HCT116 (cell line): ENCODE measurements at regions of chr5 and their contacts with region 1.

Region 1: GRCh38 chr5:72138943-72139521 is 31.8 kb downstream of the MAP1B start:
- DNase-seq: no peak
- ATAC-seq: no peak
- H3K4me3 ChIP-seq: no peak overlapping the region
- H3K27ac ChIP-seq: no peak overlapping the region
- H3K4me1 ChIP-seq: peaks cover 0 to 12% of the 10 kb centered on the region in 2 experiments; a peak in 1 of 4 replicates
- H3K27me3 ChIP-seq: no peaks in the 10 kb centered on the region
- CTCF ChIP-seq: no peak
- POLR2A ChIP-seq: no peak
- RAD21 ChIP-seq: no peak

Region 2: GRCh38 chr5:71996789-71997188 is 142.2 kb before region 1 on chr5:
- CTCF ChIA-PET with region 1: no interaction called
- POLR2A ChIA-PET with region 1: no interaction called
- RAD21 ChIA-PET with region 1: no interaction called
- intact Hi-C with region 1: no loop called
- DNase-seq: no peak
- ATAC-seq: no peak
- H3K4me3 ChIP-seq: no peak overlapping the region
- H3K27ac ChIP-seq: no peak overlapping the region
- H3K4me1 ChIP-seq: no peaks in the 10 kb centered on the region
- H3K27me3 ChIP-seq: no peaks in the 10 kb centered on the region
- CTCF ChIP-seq: no peak
- POLR2A ChIP-seq: no peak
- RAD21 ChIP-seq: no peak

Region 3: GRCh38 chr5:72093217-72093616 is 45.8 kb before region 1 on chr5:
- CTCF ChIA-PET with region 1: no interaction called
- POLR2A ChIA-PET with region 1: no interaction called
- RAD21 ChIA-PET with region 1: no interaction called
- intact Hi-C with region 1: no loop called
- DNase-seq: no peak
- ATAC-seq: no peak
- H3K4me3 ChIP-seq: no peak overlapping the region
- H3K27ac ChIP-seq: no peak overlapping the region
- H3K4me1 ChIP-seq: no peaks in the 10 kb centered on the region
- H3K27me3 ChIP-seq: no peaks in the 10 kb centered on the region
- CTCF ChIP-seq: no peak
- POLR2A ChIP-seq: no peak
- RAD21 ChIP-seq: no peak

Region 4: DNA sequence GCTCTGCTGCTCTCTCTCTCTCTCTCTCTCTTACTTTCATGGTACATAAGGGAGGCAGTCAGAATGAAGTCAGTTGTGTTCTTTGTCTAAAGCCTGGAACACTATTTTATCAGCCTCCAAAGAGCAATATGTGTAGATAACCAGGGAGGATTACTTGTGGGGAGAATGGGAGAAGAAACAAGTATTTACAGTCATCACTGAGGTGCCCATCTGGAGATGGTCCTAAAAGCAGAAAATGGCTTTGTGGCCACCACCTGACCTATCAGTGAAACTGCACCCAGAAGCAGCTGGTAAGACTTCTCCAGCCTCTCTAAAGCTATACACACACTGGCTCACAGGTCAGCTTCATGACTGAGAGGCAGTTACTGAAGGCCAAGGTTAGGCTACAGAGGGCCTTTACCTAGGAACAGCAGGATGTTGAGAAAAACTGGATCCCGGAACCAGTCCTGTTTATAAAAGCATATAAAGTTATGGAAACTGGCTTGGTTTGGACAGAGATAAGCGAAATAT is 105.9 kb after region 1 on chr5:
- CTCF ChIA-PET with region 1: no interaction called
- POLR2A ChIA-PET with region 1: no interaction called
- RAD21 ChIA-PET with region 1: no interaction called
- intact Hi-C with region 1: loop called (anchors 5 kb)
- DNase-seq: peak; percentile 24
- ATAC-seq: peak; percentile 84
- H3K4me3 ChIP-seq: no peak overlapping the region
- H3K27ac ChIP-seq: no peak overlapping the region
- H3K4me1 ChIP-seq: peaks cover 26 to 41% of the 10 kb centered on the region in 2 experiments
- H3K27me3 ChIP-seq: no peaks in the 10 kb centered on the region
- CTCF ChIP-seq: peak; percentile 30 to 51 (median 45); a peak in 5 of 6 replicates
- POLR2A ChIP-seq: no peak
- RAD21 ChIP-seq: peak; percentile 54

Region 5: DNA sequence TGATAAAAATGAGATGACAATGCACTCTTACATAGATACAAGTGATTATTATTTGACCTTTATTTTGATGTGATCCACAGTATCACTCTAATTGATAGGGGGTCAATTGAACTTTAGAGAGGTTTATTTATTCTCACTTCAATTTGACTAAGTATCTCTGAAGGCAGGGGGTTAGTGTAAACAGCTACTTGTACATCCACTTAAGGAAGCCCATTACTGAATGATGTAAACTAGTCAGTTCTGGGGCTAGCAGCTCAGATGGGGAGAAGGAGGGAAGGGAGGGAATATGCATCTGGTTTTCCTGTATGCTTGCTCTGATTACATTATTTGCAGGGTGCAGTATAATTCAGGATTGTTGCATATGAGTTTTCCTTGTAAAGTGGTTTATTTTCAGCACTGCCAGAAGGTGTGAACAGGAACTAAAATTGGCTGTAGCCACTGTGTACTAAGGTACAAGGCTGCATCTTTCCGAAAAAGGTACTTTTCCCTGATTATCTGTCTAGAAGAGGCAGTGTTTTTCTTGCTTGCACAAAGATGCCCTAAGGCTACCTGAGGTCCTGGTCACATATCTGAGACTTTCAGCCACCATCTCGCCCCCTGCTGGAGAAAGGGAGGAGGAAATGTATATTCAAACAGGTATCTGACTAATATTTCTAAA is 129.8 kb after region 1 on chr5:
- CTCF ChIA-PET with region 1: no interaction called
- POLR2A ChIA-PET with region 1: no interaction called
- RAD21 ChIA-PET with region 1: no interaction called
- intact Hi-C with region 1: loop called (anchors 5 kb)
- DNase-seq: peak; percentile 44
- ATAC-seq: peak; percentile 70
- H3K4me3 ChIP-seq: no peak overlapping the region
- H3K27ac ChIP-seq: no peak overlapping the region
- H3K4me1 ChIP-seq: no peaks in the 10 kb centered on the region
- H3K27me3 ChIP-seq: no peaks in the 10 kb centered on the region
- CTCF ChIP-seq: peak; percentile 56 to 90 (median 75); a peak in 5 of 6 replicates
- POLR2A ChIP-seq: no peak
- RAD21 ChIP-seq: peak; percentile 70

Region 6: DNA sequence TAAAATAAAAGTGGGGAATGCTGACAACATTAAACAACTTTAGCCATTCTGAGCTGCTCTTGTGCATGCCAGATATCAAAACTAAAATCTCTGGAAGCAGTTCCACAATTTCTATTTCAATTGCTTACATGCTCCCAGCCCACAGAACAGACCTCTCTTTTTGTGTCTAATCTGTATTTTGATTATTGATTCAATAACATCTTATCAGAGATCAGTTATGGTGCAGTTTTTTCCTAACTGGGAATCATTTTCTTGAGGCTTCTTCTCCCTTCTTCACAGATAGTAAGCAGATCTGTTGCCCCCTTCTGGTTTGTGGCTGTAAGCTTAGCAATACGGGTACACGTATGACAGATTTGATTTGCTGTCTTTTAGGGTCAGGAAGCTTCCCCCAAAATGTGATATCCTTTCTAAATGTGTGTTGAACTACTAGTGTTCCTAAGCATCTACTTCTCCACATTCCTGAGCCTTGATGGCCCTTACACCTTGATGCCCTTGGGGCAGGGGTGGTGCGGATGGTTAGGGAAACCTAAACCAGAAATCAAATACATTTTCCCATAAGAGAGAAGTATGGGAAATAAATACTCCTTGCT is 141.6 kb after region 1 on chr5:
- CTCF ChIA-PET with region 1: no interaction called
- POLR2A ChIA-PET with region 1: no interaction called
- RAD21 ChIA-PET with region 1: no interaction called
- intact Hi-C with region 1: loop called (anchors 1 kb)
- DNase-seq: peak; percentile 39
- ATAC-seq: peak; percentile 80
- H3K4me3 ChIP-seq: no peak overlapping the region
- H3K27ac ChIP-seq: no peak overlapping the region
- H3K4me1 ChIP-seq: peaks cover 0 to 5% of the 10 kb centered on the region in 2 experiments; a peak in 1 of 4 replicates
- H3K27me3 ChIP-seq: no peaks in the 10 kb centered on the region
- CTCF ChIP-seq: peak; percentile 32 to 64 (median 53); a peak in 5 of 6 replicates
- POLR2A ChIP-seq: no peak
- RAD21 ChIP-seq: peak; percentile 48

Region 7: DNA sequence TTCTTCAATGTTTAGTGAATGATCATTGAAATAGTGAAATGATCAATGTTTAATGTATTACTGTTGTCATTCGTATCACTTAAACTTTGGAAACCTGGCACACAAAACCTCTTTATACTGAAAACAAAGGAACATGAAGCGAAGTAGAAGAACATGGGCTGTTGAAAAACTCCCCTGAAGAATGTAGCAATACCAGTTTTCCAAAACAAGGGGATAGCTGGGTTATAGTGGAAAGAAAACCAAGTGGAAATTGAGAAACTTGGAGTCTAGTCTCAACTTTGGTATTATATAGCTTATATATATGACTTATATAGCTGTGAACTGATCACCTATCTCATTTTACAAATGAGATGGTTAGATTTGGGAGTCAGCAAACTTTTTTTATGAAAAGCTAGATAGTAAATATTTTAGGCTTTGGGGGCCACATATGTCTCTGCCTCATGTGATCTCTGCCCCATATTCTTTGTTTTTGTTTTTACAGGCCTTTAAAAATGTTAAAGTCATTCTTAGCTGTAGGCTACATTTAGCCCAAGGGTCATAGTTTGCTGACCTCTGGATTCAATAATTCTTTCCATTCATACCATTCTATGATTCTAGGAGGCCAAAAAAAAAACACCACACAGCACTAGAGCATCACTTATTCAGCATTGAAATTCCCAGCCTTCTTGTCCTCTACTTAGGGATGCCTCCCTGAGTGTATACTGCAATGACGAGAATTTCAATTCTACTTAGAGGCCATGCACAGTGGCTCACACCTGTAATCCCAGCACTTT is 197.9 kb after region 1 on chr5:
- CTCF ChIA-PET with region 1: no interaction called
- POLR2A ChIA-PET with region 1: no interaction called
- RAD21 ChIA-PET with region 1: no interaction called
- intact Hi-C with region 1: no loop called
- DNase-seq: no peak
- ATAC-seq: no peak
- H3K4me3 ChIP-seq: no peak overlapping the region
- H3K27ac ChIP-seq: no peak overlapping the region
- H3K4me1 ChIP-seq: no peaks in the 10 kb centered on the region
- H3K27me3 ChIP-seq: no peaks in the 10 kb centered on the region
- CTCF ChIP-seq: no peak
- POLR2A ChIP-seq: no peak
- RAD21 ChIP-seq: no peak